ENCODE measurements at regions of chr12 and their contacts with region 1.

Region 1: GRCh38 chr12:94898388-94898787 is 105.1 kb downstream of the NDUFA12 start:
- DNase-seq: no peak
- H3K4me3 ChIP-seq: no peak overlapping the region
- H3K4me3 Mint-ChIP-seq: no peak overlapping the region
- H3K27ac ChIP-seq: no peak overlapping the region
- H3K27ac Mint-ChIP-seq: no peak overlapping the region
- H3K4me1 ChIP-seq: no peaks in the 10 kb centered on the region
- H3K4me1 Mint-ChIP-seq: no peaks in the 10 kb centered on the region
- H3K27me3 ChIP-seq: no peaks in the 10 kb centered on the region
- H3K27me3 Mint-ChIP-seq: peaks cover 0 to 4% (median 2%) of the 10 kb centered on the region in 3 donors
- CTCF ChIP-seq: no peak

Region 2: GRCh38 chr12:94545935-94546771 is 352.2 kb before region 1 on chr12:
- intact Hi-C with region 1: loop called in 1 of 2 experiments (anchors 10 kb)
- DNase-seq: peak; percentile 6 to 40 (median 23)
- H3K4me3 ChIP-seq: no peak overlapping the region
- H3K4me3 Mint-ChIP-seq: no peak overlapping the region
- H3K27ac ChIP-seq: no peak overlapping the region
- H3K27ac Mint-ChIP-seq: peak overlapping the region in 1 of 7 donors; percentile 33
- H3K4me1 ChIP-seq: peaks cover 0 to 9% of the 10 kb centered on the region in 2 donors
- H3K4me1 Mint-ChIP-seq: peaks cover 17% of the 10 kb centered on the region
- H3K27me3 ChIP-seq: no peaks in the 10 kb centered on the region
- H3K27me3 Mint-ChIP-seq: peaks cover 1 to 2% (median 1%) of the 10 kb centered on the region in 3 donors
- CTCF ChIP-seq: peak; percentile 49

Measured in CD14-positive monocyte (primary cell).